ENCODE measurements at regions of chr17 and their contacts with region 1.

Region 1: GRCh38 chr17:8041249-8041928 is 2.5 kb downstream of the ALOX15B start:
- H3K4me3 ChIP-seq: no peak overlapping the region
- H3K27ac ChIP-seq: no peak overlapping the region
- H3K4me1 ChIP-seq: no peaks in the 10 kb centered on the region
- CTCF ChIP-seq: peak; percentile 64

Region 2: GRCh38 chr17:7856883-7857723 is 184.3 kb before region 1 on chr17 and contains the start of gene NAA38:
- CTCF ChIA-PET with region 1: interaction called, 20 read pairs
- POLR2A ChIA-PET with region 1: interaction called, 4 read pairs
- H3K4me3 ChIP-seq: peak within 1 kb of the TSS; percentile 88
- H3K27ac ChIP-seq: peak within 1 kb of the TSS; percentile 90
- H3K4me1 ChIP-seq: peaks cover 8% of the 10 kb centered on the region; the same call in 1 of the 2 replicates
- CTCF ChIP-seq: peak; percentile 97

Region 3: DNA sequence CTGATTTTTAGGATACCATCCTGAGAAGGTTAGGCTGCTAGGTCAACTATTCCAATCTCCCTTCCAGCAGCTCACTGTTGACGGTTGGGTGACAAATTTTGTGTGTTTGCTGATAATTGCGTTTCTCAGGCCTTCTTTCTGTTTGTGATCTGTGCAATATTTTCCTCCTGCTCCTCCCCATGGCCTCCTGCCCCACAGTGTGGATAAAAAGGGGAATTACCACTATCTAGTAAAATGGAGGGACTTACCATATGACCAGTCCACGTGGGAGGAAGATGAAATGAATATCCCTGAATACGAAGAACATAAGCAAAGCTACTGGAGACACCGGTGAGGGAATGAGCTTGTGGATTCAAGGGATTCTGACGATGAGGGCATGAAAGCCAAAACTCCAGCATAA is 143.6 kb before region 1 on chr17:
- CTCF ChIA-PET with region 1: interaction called, 11 read pairs
- POLR2A ChIA-PET with region 1: no interaction called
- H3K4me3 ChIP-seq: no peak overlapping the region
- H3K27ac ChIP-seq: no peak overlapping the region
- H3K4me1 ChIP-seq: peaks cover under 1% of the 10 kb centered on the region; the same call in 1 of the 2 replicates
- CTCF ChIP-seq: peak; percentile 81

Region 4: DNA sequence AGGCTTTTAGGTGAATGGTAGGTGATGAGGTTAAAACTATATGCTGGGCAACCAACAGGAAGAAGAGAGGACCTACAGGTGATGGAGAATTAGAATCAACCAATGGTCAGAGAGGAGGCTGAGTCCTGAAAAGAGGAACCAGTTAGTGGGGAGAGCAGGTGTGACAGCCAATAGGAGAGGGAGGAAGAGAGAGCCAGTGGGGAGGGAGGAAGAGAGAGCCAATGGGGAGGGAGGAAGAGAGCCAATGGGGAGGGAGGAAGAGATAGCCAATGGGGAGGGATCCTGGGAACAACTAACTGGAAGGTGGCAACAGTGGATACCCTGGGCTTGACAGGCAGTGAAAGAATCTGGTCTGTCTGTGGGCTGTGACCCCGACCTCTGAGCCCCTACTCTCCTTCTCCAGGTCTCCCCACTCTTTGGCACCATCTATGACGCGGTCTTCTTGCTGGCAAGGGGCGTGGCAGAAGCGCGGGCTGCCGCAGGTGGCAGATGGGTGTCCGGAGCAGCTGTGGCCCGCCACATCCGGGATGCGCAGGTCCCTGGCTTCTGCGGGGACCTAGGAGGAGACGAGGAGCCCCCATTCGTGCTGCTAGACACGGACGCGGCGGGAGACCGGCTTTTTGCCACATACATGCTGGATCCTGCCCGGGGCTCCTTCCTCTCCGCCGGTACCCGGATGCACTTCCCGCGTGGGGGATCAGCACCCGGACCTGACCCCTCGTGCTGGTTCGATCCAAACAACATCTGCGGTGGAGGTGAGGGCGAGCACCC is 35.2 kb before region 1 on chr17:
- CTCF ChIA-PET with region 1: interaction called, 11 read pairs
- POLR2A ChIA-PET with region 1: no interaction called
- H3K4me3 ChIP-seq: no peak overlapping the region
- H3K27ac ChIP-seq: no peak overlapping the region
- H3K4me1 ChIP-seq: no peaks in the 10 kb centered on the region
- CTCF ChIP-seq: no peak

Region 5: GRCh38 chr17:8022360-8023003 is 18.9 kb before region 1 on chr17:
- CTCF ChIA-PET with region 1: interaction called, 134 read pairs
- POLR2A ChIA-PET with region 1: interaction called, 3 read pairs
- H3K4me3 ChIP-seq: no peak overlapping the region
- H3K27ac ChIP-seq: no peak overlapping the region
- H3K4me1 ChIP-seq: no peaks in the 10 kb centered on the region
- CTCF ChIP-seq: no peak